ENCODE measurements at regions of chr6 and their contacts with region 1.

Region 1: GRCh38 chr6:70686548-70687133 is 19.0 kb downstream of the SMAP1 start:
- DNase-seq: no peak
- H3K4me3 ChIP-seq: no peak overlapping the region
- H3K27ac ChIP-seq: no peak overlapping the region
- H3K4me1 ChIP-seq: peaks cover 0 to 39% (median 15%) of the 10 kb centered on the region in 6 donors
- H3K27me3 ChIP-seq: no peaks in the 10 kb centered on the region
- CTCF ChIP-seq: peak; percentile 45 to 82 (median 71)
- POLR2A ChIP-seq: no peak

Region 2: GRCh38 chr6:70033781-70034180 is 652.9 kb before region 1 on chr6:
- intact Hi-C with region 1: no loop called
- DNase-seq: no peak
- H3K4me3 ChIP-seq: no peak overlapping the region
- H3K27ac ChIP-seq: no peak overlapping the region
- H3K4me1 ChIP-seq: no peaks in the 10 kb centered on the region
- H3K27me3 ChIP-seq: no peaks in the 10 kb centered on the region
- CTCF ChIP-seq: no peak
- POLR2A ChIP-seq: no peak

Region 3: GRCh38 chr6:70371454-70372105 is 315.1 kb before region 1 on chr6:
- intact Hi-C with region 1: loop called (anchors 5 kb)
- DNase-seq: no peak
- H3K4me3 ChIP-seq: no peak overlapping the region
- H3K27ac ChIP-seq: no peak overlapping the region
- H3K4me1 ChIP-seq: peaks cover 0 to 3% (median 0%) of the 10 kb centered on the region in 6 donors
- H3K27me3 ChIP-seq: no peaks in the 10 kb centered on the region
- CTCF ChIP-seq: peak; percentile 8 to 75 (median 56)
- POLR2A ChIP-seq: no peak

Region 4: DNA sequence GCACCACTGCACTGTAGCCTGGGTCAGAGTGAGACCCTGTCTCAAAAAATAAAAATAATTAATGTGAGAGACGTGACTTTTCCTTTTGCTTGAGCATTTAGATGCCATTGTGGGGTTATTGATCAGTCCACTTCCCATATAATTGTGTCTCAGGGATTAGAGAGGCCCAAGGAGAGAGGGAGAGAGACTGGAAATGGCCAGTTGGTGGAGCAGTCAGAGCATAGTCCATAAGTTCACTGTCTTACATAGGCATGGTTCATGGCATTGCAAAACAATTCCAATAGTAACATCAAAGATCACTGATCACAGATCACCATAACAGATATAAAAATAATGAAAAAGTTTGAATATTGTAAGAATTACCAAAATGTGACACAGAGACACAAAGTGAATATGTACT is 135.1 kb before region 1 on chr6:
- intact Hi-C with region 1: loop called (anchors 10 kb)
- DNase-seq: no peak
- H3K4me3 ChIP-seq: no peak overlapping the region
- H3K27ac ChIP-seq: no peak overlapping the region
- H3K4me1 ChIP-seq: no peaks in the 10 kb centered on the region
- H3K27me3 ChIP-seq: no peaks in the 10 kb centered on the region
- CTCF ChIP-seq: no peak
- POLR2A ChIP-seq: no peak

Measured in spleen (tissue), 13 donors.